PC-3 (cell line): ENCODE measurements at regions of chr11 and their contacts with region 1.

Region 1: DNA sequence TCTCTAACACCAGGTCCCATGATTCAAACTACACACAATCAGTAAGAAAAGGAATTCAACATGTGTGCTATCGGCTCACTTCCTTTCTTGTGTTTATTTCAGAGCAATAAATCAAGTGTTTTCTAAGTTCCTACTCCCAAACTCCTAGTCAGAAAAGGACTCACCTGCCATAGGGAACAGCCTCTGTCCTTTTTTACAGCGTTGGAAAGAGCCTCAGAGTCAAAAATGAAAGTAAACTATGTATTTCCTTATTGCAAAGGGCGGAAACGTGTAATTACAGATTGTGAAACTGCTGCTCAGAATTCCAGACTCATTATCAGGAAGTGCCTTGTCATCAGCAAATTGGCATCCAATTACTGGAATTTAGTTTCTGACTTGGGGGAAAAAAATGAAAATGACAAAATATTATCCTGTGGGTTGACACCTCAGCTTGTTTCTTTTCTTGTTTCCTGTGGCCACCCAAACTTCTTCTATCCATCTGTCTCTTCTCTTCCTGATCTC is at the start of gene CASP4:
- DNase-seq: peak; percentile 81
- ATAC-seq: peak; percentile 79
- H3K4me3 ChIP-seq: peak within 1 kb of the TSS; percentile 74
- H3K27ac ChIP-seq: peak within 1 kb of the TSS; percentile 71
- H3K4me1 ChIP-seq: peaks cover 25% of the 10 kb centered on the region
- H3K27me3 ChIP-seq: no peaks in the 10 kb centered on the region
- CTCF ChIP-seq: no peak
- total RNA-seq, gene CASP4: 38.5 and 40.9 TPM in 2 replicates

Region 2: GRCh38 chr11:104892723-104893511 is 75.5 kb before region 1 on chr11:
- CTCF ChIA-PET with region 1: no interaction called
- POLR2A ChIA-PET with region 1: no interaction called
- intact Hi-C with region 1: no loop called
- DNase-seq: peak; percentile 37
- ATAC-seq: peak; percentile 60
- H3K4me3 ChIP-seq: no peak overlapping the region
- H3K27ac ChIP-seq: no peak overlapping the region
- H3K4me1 ChIP-seq: no peaks in the 10 kb centered on the region; the same call in 1 of the 2 replicates
- H3K27me3 ChIP-seq: no peaks in the 10 kb centered on the region
- CTCF ChIP-seq: no peak

Region 3: GRCh38 chr11:105144887-105145286 is 176.5 kb after region 1 on chr11:
- CTCF ChIA-PET with region 1: no interaction called
- POLR2A ChIA-PET with region 1: no interaction called
- intact Hi-C with region 1: loop called (anchors 2 kb)
- DNase-seq: peak; percentile 91
- ATAC-seq: peak; percentile 99
- H3K4me3 ChIP-seq: peak overlapping the region; percentile 4; the same call in 1 of the 2 replicates
- H3K27ac ChIP-seq: peak overlapping the region; percentile 45
- H3K4me1 ChIP-seq: peaks cover 16% of the 10 kb centered on the region
- H3K27me3 ChIP-seq: no peaks in the 10 kb centered on the region
- CTCF ChIP-seq: no peak

Region 4: DNA sequence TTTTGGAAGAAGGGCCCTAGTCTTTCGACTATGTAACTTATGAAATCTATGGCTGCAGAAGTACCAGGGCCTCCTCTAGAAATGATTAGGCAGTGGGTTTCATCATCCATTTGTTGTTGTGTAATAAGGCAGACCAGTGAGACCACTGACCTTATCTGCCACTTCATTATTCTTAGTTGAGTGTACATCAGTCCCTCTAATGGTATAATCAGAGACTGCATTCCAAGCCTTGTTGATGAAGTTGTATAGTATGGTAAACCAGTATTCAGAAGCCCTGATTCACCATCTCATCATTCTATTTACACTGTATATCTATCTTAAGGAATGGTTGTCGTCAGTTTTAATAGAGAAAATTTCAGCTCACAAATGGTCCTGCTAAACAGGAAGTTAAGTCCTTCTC is 609.2 kb after region 1 on chr11:
- CTCF ChIA-PET with region 1: no interaction called
- POLR2A ChIA-PET with region 1: no interaction called
- intact Hi-C with region 1: loop called (anchors 10 kb)
- DNase-seq: peak; percentile 90
- ATAC-seq: peak; percentile 97
- H3K4me3 ChIP-seq: no peak overlapping the region
- H3K27ac ChIP-seq: 0 out of 2 replicates have a peak overlapping the region, but pooled peaks have one; percentile 11
- H3K4me1 ChIP-seq: peaks cover 27% of the 10 kb centered on the region
- H3K27me3 ChIP-seq: no peaks in the 10 kb centered on the region
- CTCF ChIP-seq: peak; percentile 57